Left cardiac atrium (tissue), 4 donors: ENCODE measurements at regions of chr2 and their contacts with region 1.

Region 1: GRCh38 chr2:84905181-84906107 is at the start of gene TMSB10:
- DNase-seq: peak; percentile 91
- ATAC-seq: peak; percentile 89 to 93
- total RNA-seq, gene TMSB10: 751 to 893 TPM

Region 2: GRCh38 chr2:84800194-84800805 is 105.1 kb before region 1 on chr2:
- intact Hi-C with region 1: no loop called
- DNase-seq: no peak
- ATAC-seq: no peak

Region 3: DNA sequence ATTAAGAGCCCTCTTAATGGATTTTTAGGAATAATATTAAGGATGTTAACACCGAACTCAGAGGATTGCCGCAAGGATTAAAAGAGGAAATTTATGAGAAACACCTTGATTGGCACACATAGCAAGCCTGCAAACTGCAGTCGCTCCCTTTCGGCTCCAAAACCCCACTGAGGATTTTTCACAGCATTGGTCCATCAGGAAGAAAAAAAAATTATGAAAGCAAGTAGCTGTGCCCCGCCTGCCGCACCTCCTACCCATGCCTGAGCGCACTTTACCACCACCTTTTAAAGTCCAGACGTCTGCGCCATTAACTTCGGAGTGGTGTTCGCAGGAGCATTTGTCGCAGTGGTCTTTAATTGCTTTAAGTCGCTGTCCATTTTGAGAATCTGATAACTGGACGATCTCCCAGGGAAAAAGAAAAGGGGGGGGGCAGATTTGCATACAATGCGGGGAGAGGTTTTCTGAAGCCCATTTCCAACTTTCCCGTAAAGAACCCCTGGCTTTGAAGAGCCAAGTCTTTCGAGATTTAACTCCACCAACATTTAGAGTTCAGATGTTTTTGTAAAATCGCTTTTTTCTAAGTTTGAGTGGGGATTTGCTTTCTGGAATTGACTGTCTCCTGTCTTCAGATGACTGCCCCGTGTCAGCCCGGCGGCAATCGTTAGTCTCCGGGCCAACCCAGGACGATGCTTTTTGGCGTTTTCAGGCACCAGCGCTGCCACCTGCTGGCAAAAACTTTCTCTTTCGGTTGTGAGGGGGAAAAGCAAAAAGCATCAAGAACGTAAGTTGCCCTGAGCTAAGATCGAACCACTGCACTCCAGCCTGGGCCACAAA is 23.6 kb before region 1 on chr2:
- intact Hi-C with region 1: loop called in 1 of 2 experiments (anchors 2 kb)
- DNase-seq: peak; percentile 83
- ATAC-seq: peak; percentile 80 to 86

Region 4: DNA sequence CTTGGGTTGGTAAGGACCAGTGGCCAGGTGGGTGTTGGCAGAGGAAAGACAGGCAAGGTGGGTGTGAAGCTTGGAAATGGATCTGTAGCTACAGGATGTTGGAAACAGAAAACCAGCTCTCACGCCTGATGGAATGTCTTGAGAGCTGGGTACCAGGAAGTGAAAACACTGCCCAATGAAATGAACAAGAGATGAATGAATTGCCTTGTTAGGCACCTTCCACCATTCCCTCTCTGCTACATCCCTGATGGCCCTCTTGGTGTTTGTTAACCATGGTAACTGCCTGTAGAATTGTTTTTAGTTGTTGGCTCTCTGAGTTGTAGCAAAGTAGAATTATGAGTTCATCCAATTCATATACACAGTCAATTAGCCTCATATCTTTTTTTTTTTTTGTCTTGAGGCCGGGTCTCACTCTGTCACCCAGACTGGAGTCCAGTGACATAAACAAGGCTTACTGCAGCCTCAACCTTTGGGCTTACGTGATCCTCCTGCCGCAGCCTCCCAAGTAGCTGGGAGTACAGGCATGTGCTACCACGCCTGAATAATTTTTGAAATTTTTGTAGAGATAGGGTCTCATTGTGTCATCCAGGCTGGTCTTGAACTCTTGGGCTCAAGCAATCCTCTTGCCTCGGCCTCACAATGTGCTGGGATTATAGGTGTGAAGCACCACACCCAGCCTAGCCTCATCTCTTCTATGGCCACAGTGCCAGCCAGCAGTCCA is 75.0 kb after region 1 on chr2:
- intact Hi-C with region 1: no loop called
- DNase-seq: no peak
- ATAC-seq: no peak

Region 5: DNA sequence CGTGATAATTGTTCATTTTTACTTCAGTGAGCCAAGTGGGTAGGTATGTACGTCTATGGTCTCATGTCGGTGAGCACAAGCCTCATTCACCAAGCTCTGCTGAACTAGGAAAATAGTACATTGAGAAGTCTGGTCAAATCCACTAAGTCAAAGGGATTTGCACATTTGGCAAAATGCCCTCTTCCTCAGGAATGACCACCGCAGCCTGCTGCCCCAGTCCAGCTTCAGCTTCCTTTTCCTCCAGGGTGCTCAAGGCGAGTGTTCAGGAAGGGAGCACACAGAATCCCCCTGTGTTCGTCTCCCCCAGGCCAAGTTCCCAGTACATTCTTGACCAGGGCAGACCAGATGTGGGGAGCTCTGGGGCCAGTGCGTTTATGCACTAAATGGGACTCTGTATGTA is 250.7 kb after region 1 on chr2:
- intact Hi-C with region 1: no loop called
- DNase-seq: no peak
- ATAC-seq: no peak